IMR-90 (cell line): ENCODE measurements at regions of chr14 and their contacts with region 1.

Region 1: DNA sequence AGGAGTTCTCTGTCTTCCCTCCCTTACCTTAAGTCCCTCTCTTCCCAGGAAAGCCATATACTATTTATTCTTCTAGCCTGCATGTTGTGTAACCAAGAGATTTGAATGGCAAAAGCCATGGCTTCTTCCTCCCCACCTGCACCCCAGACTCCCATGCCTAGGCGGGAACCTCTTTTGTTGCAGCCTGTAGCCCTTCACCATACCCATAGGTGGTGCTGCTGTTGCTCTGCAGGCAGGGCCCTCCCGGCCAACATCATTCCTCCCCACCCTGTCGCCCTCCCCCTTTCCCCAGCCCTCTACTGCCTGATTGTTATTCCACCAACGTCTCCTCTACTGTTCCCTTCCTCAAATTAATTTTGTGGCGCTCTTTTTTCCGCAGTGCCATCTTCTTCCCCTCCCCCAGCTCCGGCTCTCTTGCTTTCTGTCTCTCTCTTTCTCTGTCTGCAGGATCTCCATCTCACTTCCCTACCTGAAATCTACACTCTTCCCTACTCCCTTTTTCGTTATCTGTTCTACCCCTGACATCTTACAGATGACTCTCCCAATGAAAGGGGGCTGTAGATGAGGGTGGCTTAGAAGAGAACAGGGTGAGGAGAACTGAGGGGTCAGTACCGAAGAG is 13.8 kb downstream of the NGDN start:
- DNase-seq: peak; percentile 13
- ATAC-seq: peak; percentile 80
- H3K4me3 ChIP-seq: no peak overlapping the region
- H3K27ac ChIP-seq: no peak overlapping the region
- H3K4me1 ChIP-seq: no peaks in the 10 kb centered on the region
- H3K27me3 ChIP-seq: no peaks in the 10 kb centered on the region
- CTCF ChIP-seq: peak; percentile 51
- POLR2A ChIP-seq: no peak
- RAD21 ChIP-seq: peak; percentile 66

Region 2: GRCh38 chr14:23555882-23556699 is 72.7 kb after region 1 on chr14 and contains the start of gene THTPA:
- CTCF ChIA-PET with region 1: interaction called, 30 read pairs
- POLR2A ChIA-PET with region 1: no interaction called
- dilution Hi-C with region 1: no loop called
- in situ Hi-C with region 1: loop called (anchors 5 kb)
- intact Hi-C with region 1: loop called (anchors 1 kb)
- DNase-seq: peak; percentile 83
- ATAC-seq: peak; percentile 91
- H3K4me3 ChIP-seq: peak within 1 kb of the TSS; percentile 77
- H3K27ac ChIP-seq: peak within 1 kb of the TSS; percentile 85
- H3K4me1 ChIP-seq: peaks cover 7% of the 10 kb centered on the region
- H3K27me3 ChIP-seq: no peaks in the 10 kb centered on the region
- CTCF ChIP-seq: no peak
- POLR2A ChIP-seq: peak; percentile 69; the same call in 1 of the 2 replicates
- RAD21 ChIP-seq: no peak
- total RNA-seq, gene THTPA: 5.0 and 5.8 TPM in 2 replicates

Region 3: GRCh38 chr14:24565766-24566165 is 1082.4 kb after region 1 on chr14:
- CTCF ChIA-PET with region 1: no interaction called
- POLR2A ChIA-PET with region 1: no interaction called
- dilution Hi-C with region 1: no loop called
- in situ Hi-C with region 1: no loop called
- intact Hi-C with region 1: no loop called
- DNase-seq: no peak
- ATAC-seq: no peak
- H3K4me3 ChIP-seq: no peak overlapping the region
- H3K27ac ChIP-seq: no peak overlapping the region
- H3K4me1 ChIP-seq: no peaks in the 10 kb centered on the region
- H3K27me3 ChIP-seq: no peaks in the 10 kb centered on the region
- CTCF ChIP-seq: no peak
- POLR2A ChIP-seq: no peak
- RAD21 ChIP-seq: no peak